IMR-90 (cell line): ENCODE measurements at regions of chr17 and their contacts with region 1.

Region 1: GRCh38 chr17:6290488-6291196 is 144.3 kb downstream of the AIPL1 start:
- DNase-seq: no peak
- ATAC-seq: no peak
- H3K4me3 ChIP-seq: no peak overlapping the region
- H3K27ac ChIP-seq: no peak overlapping the region
- H3K4me1 ChIP-seq: no peaks in the 10 kb centered on the region
- H3K27me3 ChIP-seq: no peaks in the 10 kb centered on the region
- CTCF ChIP-seq: no peak
- POLR2A ChIP-seq: no peak
- RAD21 ChIP-seq: no peak

Region 2: DNA sequence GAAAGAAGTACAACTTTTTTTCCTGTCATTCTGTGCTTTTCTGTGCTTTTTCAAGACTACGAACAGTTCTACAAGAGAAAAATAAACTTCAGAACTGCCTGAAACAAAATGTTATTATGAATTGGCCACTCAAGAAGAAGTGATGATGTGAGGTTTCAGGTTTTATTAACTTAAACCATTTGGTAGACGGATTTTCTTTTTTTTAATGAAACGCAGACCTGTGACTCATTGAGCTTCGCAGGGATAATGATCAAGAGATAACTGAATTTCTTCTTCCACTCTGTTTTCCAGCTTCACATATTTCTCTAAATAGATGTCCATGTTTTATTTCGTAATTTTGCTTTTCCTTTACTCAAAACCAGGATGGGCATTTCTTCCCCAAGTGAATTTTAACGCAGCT is 111.6 kb after region 1 on chr17:
- CTCF ChIA-PET with region 1: no interaction called
- POLR2A ChIA-PET with region 1: no interaction called
- dilution Hi-C with region 1: no loop called
- in situ Hi-C with region 1: no loop called
- intact Hi-C with region 1: loop called (anchors 10 kb)
- DNase-seq: no peak
- ATAC-seq: no peak
- H3K4me3 ChIP-seq: no peak overlapping the region
- H3K27ac ChIP-seq: no peak overlapping the region
- H3K4me1 ChIP-seq: no peaks in the 10 kb centered on the region
- H3K27me3 ChIP-seq: 0 out of 2 replicates have a peak, but pooled peaks cover 2% of the 10 kb centered on the region
- CTCF ChIP-seq: no peak
- POLR2A ChIP-seq: no peak
- RAD21 ChIP-seq: no peak